HepG2 (cell line): ENCODE measurements at regions of chr17 and their contacts with region 1.

Region 1: GRCh38 chr17:57902800-57903759 is 52.1 kb downstream of the CUEDC1 start:
- DNase-seq: peak; percentile 97
- ATAC-seq: peak; percentile 89
- H3K4me3 ChIP-seq: peak overlapping the region in 1 of 3 experiments; percentile 39; a peak in 1 of 6 replicates
- H3K27ac ChIP-seq: peak overlapping the region; percentile 87
- H3K4me1 ChIP-seq: peaks cover 91% of the 10 kb centered on the region
- H3K27me3 ChIP-seq: no peaks in the 10 kb centered on the region
- CTCF ChIP-seq: peak; percentile 27; the same call in 1 of the 2 replicates
- EP300 ChIP-seq: peak; percentile 57 to 85; a peak in 3 of 4 replicates
- POLR2A ChIP-seq: peak; percentile 42 to 45; a peak in 1 of 4 replicates
- RAD21 ChIP-seq: no peak; the same call in 1 of the 2 replicates

Region 2: DNA sequence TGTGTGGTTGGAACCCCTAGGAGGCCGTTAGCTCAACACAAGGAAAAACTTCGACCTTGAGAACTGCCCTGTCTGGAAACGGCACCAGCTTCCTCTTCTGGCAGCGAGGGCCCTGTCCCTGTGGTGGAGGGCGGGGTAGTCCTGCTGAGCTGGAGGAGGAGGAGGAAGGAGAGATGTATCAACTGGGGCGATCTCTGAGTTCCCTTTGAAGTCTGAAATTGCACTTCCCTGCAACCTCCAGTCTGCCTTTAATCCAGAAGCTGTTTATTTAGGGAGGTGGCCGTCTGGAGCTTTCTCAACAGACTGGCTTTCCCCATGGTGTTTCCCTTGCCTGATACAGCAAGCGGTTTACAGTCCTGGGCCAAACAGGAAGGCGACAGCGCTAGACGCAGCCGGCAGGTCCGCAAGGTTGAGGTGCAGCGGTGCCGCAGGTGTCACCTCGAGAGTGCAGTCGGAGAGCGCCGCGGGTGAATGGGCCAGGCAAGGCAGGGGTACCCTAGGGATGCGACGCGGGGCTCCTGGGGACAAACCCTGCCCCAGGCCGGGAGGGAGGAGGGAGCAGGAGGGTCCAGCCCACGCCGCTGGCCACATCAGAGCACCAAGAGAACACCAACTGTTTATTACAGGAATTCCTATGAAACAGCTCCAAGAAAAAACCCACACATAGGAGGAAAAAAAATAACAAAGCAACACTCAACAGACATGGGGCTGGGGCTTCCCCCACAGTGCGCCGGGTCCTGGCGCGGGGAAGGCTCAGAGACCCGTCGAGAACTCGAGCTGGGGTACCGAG is 41.9 kb before region 1 on chr17:
- CTCF ChIA-PET with region 1: no interaction called
- POLR2A ChIA-PET with region 1: interaction called, 16 read pairs
- in situ Hi-C with region 1: no loop called
- intact Hi-C with region 1: loop called (anchors 1 kb)
- DNase-seq: peak; percentile 94
- ATAC-seq: peak; percentile 56
- H3K4me3 ChIP-seq: peak overlapping the region; percentile 71 to 90 (median 81)
- H3K27ac ChIP-seq: peak overlapping the region; percentile 77
- H3K4me1 ChIP-seq: peaks cover 68% of the 10 kb centered on the region
- H3K27me3 ChIP-seq: no peaks in the 10 kb centered on the region; a peak in 1 of 5 replicates
- CTCF ChIP-seq: peak; percentile 26; the same call in 1 of the 2 replicates
- EP300 ChIP-seq: peak in 1 of 2 experiments; percentile 90; a peak in 2 of 4 replicates
- POLR2A ChIP-seq: peak; percentile 46 to 72; a peak in 2 of 4 replicates
- RAD21 ChIP-seq: no peak

Region 3: GRCh38 chr17:57875309-57876115 is 27.6 kb before region 1 on chr17:
- CTCF ChIA-PET with region 1: interaction called, 3 read pairs
- POLR2A ChIA-PET with region 1: interaction called, 14 read pairs
- in situ Hi-C with region 1: no loop called
- intact Hi-C with region 1: loop called (anchors 1 kb)
- DNase-seq: peak; percentile 93
- ATAC-seq: peak; percentile 85
- H3K4me3 ChIP-seq: peak overlapping the region in 1 of 3 experiments; percentile 15; a peak in 1 of 6 replicates
- H3K27ac ChIP-seq: peak overlapping the region; percentile 64
- H3K4me1 ChIP-seq: peaks cover 68% of the 10 kb centered on the region
- H3K27me3 ChIP-seq: no peaks in the 10 kb centered on the region
- CTCF ChIP-seq: peak; percentile 62
- EP300 ChIP-seq: peak in 1 of 2 experiments; percentile 51; a peak in 1 of 4 replicates
- POLR2A ChIP-seq: no peak
- RAD21 ChIP-seq: peak; percentile 60; the same call in 1 of the 2 replicates

Region 4: GRCh38 chr17:57939797-57940196 is 36.7 kb after region 1 on chr17:
- CTCF ChIA-PET with region 1: no interaction called
- POLR2A ChIA-PET with region 1: interaction called, 11 read pairs
- in situ Hi-C with region 1: no loop called
- intact Hi-C with region 1: no loop called
- DNase-seq: no peak
- ATAC-seq: no peak
- H3K4me3 ChIP-seq: no peak overlapping the region
- H3K27ac ChIP-seq: no peak overlapping the region
- H3K4me1 ChIP-seq: peaks cover 74% of the 10 kb centered on the region
- H3K27me3 ChIP-seq: no peaks in the 10 kb centered on the region
- CTCF ChIP-seq: no peak
- EP300 ChIP-seq: no peak
- POLR2A ChIP-seq: no peak
- RAD21 ChIP-seq: no peak

Region 5: GRCh38 chr17:57955183-57955931 is 52.3 kb after region 1 on chr17 and contains the start of gene CUEDC1:
- CTCF ChIA-PET with region 1: no interaction called
- POLR2A ChIA-PET with region 1: interaction called, 8 read pairs
- in situ Hi-C with region 1: loop called (anchors 5 kb)
- intact Hi-C with region 1: loop called (anchors 2 kb)
- DNase-seq: no peak
- ATAC-seq: peak; percentile 75
- H3K4me3 ChIP-seq: peak within 1 kb of the TSS; percentile 71 to 92 (median 73)
- H3K27ac ChIP-seq: peak within 1 kb of the TSS; percentile 15
- H3K4me1 ChIP-seq: peaks cover 65% of the 10 kb centered on the region
- H3K27me3 ChIP-seq: peaks cover 16 to 39% of the 10 kb centered on the region in 2 experiments
- CTCF ChIP-seq: peak; percentile 52
- EP300 ChIP-seq: no peak
- POLR2A ChIP-seq: no peak
- RAD21 ChIP-seq: 0 out of 2 replicates have a peak, but pooled peaks have one; percentile 6
- total RNA-seq, gene CUEDC1: 4.2 and 7.4 TPM in 2 replicates

Region 6: DNA sequence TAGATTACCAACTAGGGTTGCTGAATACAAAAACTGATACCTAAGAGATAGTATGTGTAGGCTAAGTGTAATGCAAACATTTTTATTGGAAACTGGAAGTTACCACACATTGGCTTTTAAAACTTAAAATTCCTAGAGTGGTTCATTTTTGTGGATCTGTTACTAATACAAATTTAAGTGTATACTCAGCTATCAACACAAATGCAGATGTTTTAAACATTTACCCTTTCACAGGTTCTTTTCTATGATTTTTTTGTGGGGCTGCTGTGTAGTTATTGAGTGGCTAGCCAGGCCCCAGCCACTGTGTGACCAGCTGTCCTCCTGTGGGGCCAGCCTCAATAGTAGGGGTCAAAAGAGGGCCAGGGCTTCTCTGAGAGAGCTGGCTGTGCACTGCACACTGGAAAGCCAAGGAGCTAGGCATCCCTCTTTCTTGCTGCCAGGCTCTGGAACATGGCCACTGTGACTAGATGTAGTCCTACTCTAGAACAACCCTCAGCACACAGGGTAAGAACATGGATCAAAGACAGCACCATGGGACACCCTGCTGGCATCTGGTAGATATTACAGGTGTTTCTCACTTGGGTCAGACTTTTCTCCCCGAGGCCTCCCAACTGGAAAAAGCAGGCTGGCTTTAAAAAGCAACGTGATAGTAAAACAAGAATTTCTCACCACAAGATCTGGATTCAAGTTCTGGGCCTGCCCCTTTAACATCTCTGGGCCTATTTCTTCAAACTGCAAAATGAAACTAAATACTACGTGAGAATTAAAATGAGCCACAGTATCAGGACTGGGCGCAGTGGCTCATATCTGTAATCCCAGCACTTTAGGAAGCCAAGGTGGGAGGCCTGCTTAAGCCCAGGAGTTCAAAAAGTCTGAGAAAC is 92.2 kb after region 1 on chr17:
- CTCF ChIA-PET with region 1: no interaction called
- POLR2A ChIA-PET with region 1: interaction called, 7 read pairs
- in situ Hi-C with region 1: no loop called
- intact Hi-C with region 1: loop called (anchors 2 kb)
- DNase-seq: peak; percentile 87
- ATAC-seq: peak; percentile 78
- H3K4me3 ChIP-seq: no peak overlapping the region
- H3K27ac ChIP-seq: peak overlapping the region; percentile 4
- H3K4me1 ChIP-seq: peaks cover 57% of the 10 kb centered on the region
- H3K27me3 ChIP-seq: no peaks in the 10 kb centered on the region
- CTCF ChIP-seq: peak; percentile 93
- EP300 ChIP-seq: no peak
- POLR2A ChIP-seq: peak; percentile 41 to 80; a peak in 2 of 4 replicates
- RAD21 ChIP-seq: peak; percentile 89